ENCODE measurements at regions of chr14 and their contacts with region 1.

Region 1: DNA sequence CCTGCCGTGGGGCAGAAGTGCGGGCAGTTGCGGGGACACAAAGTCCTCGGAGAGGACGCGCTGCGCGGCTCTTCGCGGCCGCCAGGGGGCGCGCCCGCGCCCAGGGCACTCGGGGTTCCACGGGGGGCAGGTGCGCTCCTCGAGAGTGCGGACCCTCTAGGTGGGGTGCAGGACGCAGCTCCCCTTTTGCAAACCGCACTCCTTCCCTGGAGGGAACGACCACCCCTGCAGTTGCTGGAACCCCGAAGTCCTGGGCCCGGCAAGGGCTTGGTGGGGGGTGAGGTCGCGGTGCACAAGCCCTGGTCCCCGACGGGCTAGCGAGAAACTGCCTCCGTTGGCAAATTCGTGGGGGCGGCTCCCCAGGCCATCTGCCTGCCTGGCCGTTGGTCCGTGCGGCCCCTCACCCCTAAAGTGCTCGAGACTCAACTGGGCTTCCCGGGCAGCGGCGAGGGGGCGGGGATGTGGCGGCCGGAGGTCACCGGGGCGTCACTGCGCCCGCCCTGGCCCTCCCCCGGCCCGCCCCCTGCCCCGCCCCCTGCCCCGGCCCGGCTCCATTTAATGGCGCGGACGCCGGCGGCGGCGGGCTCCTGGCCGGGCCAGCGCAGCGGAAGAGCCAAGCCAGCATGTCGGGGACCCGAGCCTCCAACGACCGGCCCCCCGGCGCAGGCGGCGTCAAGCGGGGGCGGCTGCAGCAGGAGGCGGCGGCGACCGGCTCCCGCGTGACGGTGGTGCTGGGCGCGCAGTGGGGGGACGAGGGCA is at the start of gene ADSS1:
- H3K4me3 ChIP-seq: peak within 1 kb of the TSS; percentile 57
- H3K27ac ChIP-seq: no peak within 1 kb of the TSS
- H3K4me1 ChIP-seq: no peaks in the 10 kb centered on the region; the same call in 1 of the 2 replicates
- CTCF ChIP-seq: peak; percentile 89

Region 2: GRCh38 chr14:104735830-104736642 is 12.2 kb after region 1 on chr14:
- CTCF ChIA-PET with region 1: interaction called, 12 read pairs
- POLR2A ChIA-PET with region 1: no interaction called
- H3K4me3 ChIP-seq: no peak overlapping the region
- H3K27ac ChIP-seq: no peak overlapping the region
- H3K4me1 ChIP-seq: no peaks in the 10 kb centered on the region
- CTCF ChIP-seq: no peak

Measured in HEK293 (cell line).